RWPE1 (cell line): ENCODE measurements at regions of chr12 and their contacts with region 1.

Region 1: GRCh38 chr12:57111031-57111734 is at the start of gene STAT6:
- DNase-seq: peak; percentile 68
- H3K27ac ChIP-seq: peak within 1 kb of the TSS; percentile 100
- CTCF ChIP-seq: no peak; the same call in 1 of the 2 replicates

Region 2: GRCh38 chr12:57069523-57069922 is 41.7 kb before region 1 on chr12:
- CTCF ChIA-PET with region 1: interaction called, 35 read pairs
- POLR2A ChIA-PET with region 1: interaction called, 19 read pairs
- DNase-seq: peak; percentile 52
- H3K27ac ChIP-seq: no peak overlapping the region
- CTCF ChIP-seq: peak; percentile 79

Region 3: GRCh38 chr12:57088459-57089248 is 22.5 kb before region 1 on chr12 and contains the start of gene NAB2:
- CTCF ChIA-PET with region 1: interaction called, 15 read pairs
- POLR2A ChIA-PET with region 1: interaction called, 37 read pairs
- DNase-seq: peak; percentile 79
- H3K27ac ChIP-seq: peak within 1 kb of the TSS; percentile 100
- CTCF ChIP-seq: no peak

Region 4: DNA sequence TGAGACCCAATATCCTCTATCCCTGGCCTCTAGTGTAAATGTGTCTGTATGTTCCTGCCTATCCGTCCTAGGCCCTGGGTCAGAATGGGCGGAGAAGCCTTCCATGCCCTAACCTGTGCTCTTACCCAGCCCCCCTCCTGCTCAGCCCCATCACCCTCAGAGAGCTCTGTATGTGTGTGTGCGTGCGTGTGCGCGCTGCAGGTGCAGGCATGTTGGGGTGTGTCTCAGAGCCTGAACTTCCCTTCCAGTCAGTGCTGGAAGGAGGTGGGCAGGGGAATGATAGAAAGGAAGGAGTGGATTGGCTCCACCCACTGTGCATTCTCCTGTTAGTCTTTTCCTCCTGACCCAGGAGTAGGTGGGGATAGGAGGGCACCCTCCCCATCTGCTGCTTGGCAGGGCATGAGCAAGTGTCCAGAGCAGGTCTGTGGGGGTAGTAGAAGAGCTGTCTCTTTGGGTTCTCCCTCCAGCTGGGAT is 15.0 kb before region 1 on chr12:
- CTCF ChIA-PET with region 1: interaction called, 15 read pairs
- POLR2A ChIA-PET with region 1: interaction called, 15 read pairs
- DNase-seq: peak; percentile 96
- H3K27ac ChIP-seq: peak overlapping the region; percentile 100
- CTCF ChIP-seq: no peak

Region 5: DNA sequence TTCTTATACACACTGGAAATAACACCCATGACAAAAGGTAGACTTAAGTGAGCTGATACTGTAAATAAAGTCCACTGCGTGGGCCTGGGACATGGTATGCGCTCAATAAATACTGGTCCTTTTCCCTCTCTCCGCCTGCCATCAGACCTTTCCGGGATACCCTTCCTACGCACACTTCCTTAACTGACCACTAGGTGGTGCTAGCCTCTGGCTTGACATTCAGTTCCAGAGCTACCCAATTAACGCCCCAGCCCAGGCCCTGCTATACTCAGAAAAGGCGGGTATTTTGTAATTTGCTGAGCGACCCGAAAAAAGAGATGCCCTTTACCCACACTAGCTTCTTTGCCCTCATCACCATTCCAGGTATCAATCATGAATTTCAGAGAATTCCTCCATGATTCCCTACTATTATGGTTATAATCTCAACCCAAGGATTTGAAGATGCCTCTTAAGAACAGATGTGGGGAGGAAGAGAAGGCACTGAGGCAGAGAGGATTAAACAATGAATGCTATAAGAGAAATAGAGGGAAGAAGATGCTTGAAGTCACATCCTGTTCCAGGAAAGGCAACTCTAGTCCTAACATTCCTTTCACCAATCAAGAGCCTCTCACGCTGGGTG is 13.2 kb after region 1 on chr12:
- CTCF ChIA-PET with region 1: interaction called, 6 read pairs
- POLR2A ChIA-PET with region 1: interaction called, 11 read pairs
- DNase-seq: peak; percentile 67
- H3K27ac ChIP-seq: no peak overlapping the region
- CTCF ChIP-seq: peak; percentile 95